Transverse colon (tissue), 4 donors: ENCODE measurements at regions of chr10 and their contacts with region 1.

Region 1: GRCh38 chr10:56583316-56583715 is 222.3 kb upstream of the ZWINT start:
- DNase-seq: no peak
- H3K4me3 ChIP-seq: no peak overlapping the region
- H3K27ac ChIP-seq: no peak overlapping the region
- H3K4me1 ChIP-seq: no peaks in the 10 kb centered on the region
- H3K27me3 ChIP-seq: no peaks in the 10 kb centered on the region
- CTCF ChIP-seq: no peak
- EP300 ChIP-seq: no peak
- POLR2A ChIP-seq: no peak

Region 2: GRCh38 chr10:55989188-55989587 is 594.1 kb before region 1 on chr10:
- in situ Hi-C with region 1: no loop called
- intact Hi-C with region 1: loop called (anchors 5 kb)
- DNase-seq: no peak
- H3K4me3 ChIP-seq: no peak overlapping the region
- H3K27ac ChIP-seq: no peak overlapping the region
- H3K4me1 ChIP-seq: no peaks in the 10 kb centered on the region
- H3K27me3 ChIP-seq: no peaks in the 10 kb centered on the region
- CTCF ChIP-seq: no peak
- EP300 ChIP-seq: no peak
- POLR2A ChIP-seq: no peak